ENCODE measurements at regions of chr1 and their contacts with region 1.

Region 1: GRCh38 chr1:107664982-107665925 is 299.7 kb downstream of the VAV3 start:
- DNase-seq: no peak
- H3K4me3 ChIP-seq: no peak overlapping the region
- H3K27ac ChIP-seq: no peak overlapping the region
- H3K4me1 ChIP-seq: no peaks in the 10 kb centered on the region
- CTCF ChIP-seq: no peak

Region 2: GRCh38 chr1:107599220-107599619 is 66.0 kb before region 1 on chr1:
- CTCF ChIA-PET with region 1: no interaction called
- POLR2A ChIA-PET with region 1: no interaction called
- intact Hi-C with region 1: no loop called
- DNase-seq: no peak
- H3K4me3 ChIP-seq: no peak overlapping the region
- H3K27ac ChIP-seq: no peak overlapping the region
- H3K4me1 ChIP-seq: peaks cover 7% of the 10 kb centered on the region
- CTCF ChIP-seq: no peak

Region 3: DNA sequence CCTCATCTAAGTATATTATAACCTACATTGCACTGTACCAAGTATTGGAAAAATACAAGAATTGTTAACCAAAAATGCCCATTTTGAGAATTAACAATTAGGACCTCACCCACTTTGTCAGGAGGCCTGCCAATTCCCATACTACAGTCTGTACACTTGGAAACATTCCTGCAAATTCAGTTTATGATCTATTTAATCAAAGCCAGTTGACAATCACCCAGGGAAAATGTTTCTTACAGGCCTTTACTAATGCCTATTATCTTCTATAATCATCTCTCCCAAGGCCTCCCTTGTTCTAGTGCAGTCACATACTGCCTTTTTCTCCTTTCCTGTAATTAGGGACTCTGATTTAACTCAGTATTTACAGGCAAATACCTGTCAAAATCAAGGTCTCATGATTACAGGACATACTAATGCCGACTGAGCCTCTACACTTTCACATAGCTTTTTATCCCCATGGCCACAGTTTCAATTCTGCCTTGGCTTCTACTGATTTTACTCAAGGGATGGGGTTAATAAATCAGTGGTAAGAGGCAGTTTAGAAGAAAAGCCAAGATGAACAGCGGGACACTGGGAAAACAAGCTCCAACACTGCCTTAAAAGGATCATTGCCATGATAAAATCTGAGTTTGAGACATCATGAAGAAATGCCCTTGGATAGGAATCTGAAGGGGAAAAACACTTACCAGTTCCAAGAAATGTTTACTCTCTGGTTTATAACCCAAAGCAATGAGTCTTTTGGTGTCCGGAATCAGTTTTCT is 39.0 kb before region 1 on chr1:
- CTCF ChIA-PET with region 1: no interaction called
- POLR2A ChIA-PET with region 1: interaction called, 3 read pairs
- intact Hi-C with region 1: loop called (anchors 5 kb)
- DNase-seq: no peak
- H3K4me3 ChIP-seq: no peak overlapping the region
- H3K27ac ChIP-seq: no peak overlapping the region
- H3K4me1 ChIP-seq: peaks cover 14% of the 10 kb centered on the region
- CTCF ChIP-seq: no peak